Mammary epithelial cell (primary cell): ENCODE measurements at regions of chr6 and their contacts with region 1.

Region 1: DNA sequence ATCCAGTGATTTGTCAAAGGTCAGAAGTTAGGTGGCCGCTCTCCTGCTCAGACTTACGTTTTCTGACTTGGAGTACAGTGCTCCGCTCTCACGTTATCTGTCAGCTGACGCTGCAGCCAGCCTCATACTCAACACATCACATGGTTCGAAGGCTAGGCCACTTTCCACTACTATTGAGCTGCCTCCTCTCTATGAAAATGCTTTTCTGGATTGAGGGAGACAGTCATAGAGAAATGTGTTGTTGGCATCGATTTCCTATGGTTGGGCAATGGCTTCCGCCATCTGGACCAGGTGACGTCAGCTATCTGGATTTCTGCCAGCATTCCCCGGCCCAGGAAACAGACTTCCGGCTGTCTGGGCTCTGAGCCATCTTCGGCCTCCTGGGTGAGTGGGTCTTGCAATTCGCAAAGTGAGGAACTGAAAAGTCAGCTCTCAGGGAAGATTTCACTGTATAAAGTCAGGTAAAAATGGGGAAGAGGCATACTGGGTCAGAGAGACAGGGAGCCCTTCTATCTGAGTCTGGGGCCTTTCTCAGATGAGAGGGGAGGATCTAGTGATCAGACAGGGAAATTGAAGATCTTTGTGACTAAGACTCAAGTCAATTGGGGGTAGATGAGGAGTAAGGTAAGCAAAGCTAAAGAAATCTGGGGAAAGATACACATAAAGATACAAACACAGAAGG is 37.5 kb upstream of the IER3 start:
- DNase-seq: peak; percentile 97
- H3K4me3 ChIP-seq: no peak overlapping the region
- H3K27ac ChIP-seq: peak overlapping the region; percentile 97
- H3K4me1 ChIP-seq: peaks cover 36% of the 10 kb centered on the region
- H3K27me3 ChIP-seq: no peaks in the 10 kb centered on the region
- CTCF ChIP-seq: no peak

Region 2: DNA sequence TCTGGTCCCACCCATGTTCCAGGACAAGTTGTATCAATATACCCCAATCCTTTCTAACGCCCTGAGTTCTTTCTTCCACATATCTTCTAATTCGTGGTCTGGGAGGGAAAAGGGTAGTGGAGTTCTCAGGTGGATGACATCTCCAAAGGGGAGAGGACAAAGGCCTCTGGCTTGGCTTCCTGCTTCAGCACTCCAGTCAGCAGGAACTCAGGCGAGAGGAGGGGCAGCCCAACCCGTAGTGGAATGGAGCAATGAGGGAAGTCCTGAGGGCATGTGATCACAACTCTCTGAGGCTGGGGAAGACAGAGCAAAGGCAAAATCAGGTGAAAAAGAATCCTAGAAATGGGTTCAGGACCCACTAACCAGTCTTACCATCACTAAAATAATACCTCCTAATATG is 81.5 kb before region 1 on chr6:
- CTCF ChIA-PET with region 1: no interaction called
- dilution Hi-C with region 1: no loop called
- in situ Hi-C with region 1: no loop called
- intact Hi-C with region 1: no loop called
- DNase-seq: no peak
- H3K4me3 ChIP-seq: no peak overlapping the region
- H3K27ac ChIP-seq: no peak overlapping the region
- H3K4me1 ChIP-seq: peaks cover 4% of the 10 kb centered on the region
- H3K27me3 ChIP-seq: no peaks in the 10 kb centered on the region
- CTCF ChIP-seq: no peak

Region 3: DNA sequence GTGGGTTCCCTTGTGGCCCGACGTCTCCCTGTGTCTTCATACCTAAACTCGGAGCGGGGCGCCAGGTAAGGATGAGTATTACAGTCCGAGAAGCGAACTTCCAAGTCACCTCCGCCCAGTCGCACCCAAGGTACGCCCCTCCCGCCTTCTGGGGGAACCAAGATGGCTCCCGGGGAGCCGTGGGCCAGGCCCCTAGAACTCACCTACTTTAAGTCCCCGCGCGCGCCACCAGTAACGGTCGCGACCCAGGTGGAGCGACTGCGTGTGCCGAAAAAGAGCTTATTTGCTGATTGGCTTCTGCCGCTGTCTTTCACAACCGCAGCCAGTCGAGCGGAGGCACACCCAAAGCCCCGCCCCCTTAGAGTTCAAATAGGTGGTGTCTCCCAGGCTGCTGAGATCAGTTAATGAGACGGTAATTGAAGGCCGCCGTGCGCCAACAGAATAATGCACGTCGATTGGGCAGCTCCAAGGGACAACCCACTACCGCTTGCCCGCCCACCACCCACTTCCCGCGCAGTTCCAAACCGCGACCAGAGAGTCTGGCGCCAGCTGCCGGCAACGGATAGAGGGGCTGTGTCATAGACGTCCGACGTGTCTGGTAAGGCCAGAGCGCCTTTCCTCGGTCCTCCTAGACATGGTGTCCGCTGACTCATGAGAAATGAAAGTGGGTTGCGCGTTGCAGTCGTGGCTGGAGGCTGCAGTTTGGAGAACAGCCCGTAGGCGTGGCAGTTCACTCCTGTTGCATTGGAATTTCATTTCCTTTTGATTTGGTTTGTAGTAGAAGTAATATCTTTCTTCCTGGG is 64.6 kb before region 1 on chr6 and contains the start of gene MDC1:
- CTCF ChIA-PET with region 1: no interaction called
- dilution Hi-C with region 1: no loop called
- in situ Hi-C with region 1: no loop called
- intact Hi-C with region 1: no loop called
- DNase-seq: peak; percentile 100
- H3K4me3 ChIP-seq: peak within 1 kb of the TSS; percentile 56 to 69 (median 61)
- H3K27ac ChIP-seq: peak within 1 kb of the TSS; percentile 78
- H3K4me1 ChIP-seq: peaks cover 33% of the 10 kb centered on the region
- H3K27me3 ChIP-seq: no peaks in the 10 kb centered on the region
- CTCF ChIP-seq: peak in 1 of 2 donors; percentile 43
- total RNA-seq, gene MDC1: 12.8 to 36.7 TPM

Region 4: DNA sequence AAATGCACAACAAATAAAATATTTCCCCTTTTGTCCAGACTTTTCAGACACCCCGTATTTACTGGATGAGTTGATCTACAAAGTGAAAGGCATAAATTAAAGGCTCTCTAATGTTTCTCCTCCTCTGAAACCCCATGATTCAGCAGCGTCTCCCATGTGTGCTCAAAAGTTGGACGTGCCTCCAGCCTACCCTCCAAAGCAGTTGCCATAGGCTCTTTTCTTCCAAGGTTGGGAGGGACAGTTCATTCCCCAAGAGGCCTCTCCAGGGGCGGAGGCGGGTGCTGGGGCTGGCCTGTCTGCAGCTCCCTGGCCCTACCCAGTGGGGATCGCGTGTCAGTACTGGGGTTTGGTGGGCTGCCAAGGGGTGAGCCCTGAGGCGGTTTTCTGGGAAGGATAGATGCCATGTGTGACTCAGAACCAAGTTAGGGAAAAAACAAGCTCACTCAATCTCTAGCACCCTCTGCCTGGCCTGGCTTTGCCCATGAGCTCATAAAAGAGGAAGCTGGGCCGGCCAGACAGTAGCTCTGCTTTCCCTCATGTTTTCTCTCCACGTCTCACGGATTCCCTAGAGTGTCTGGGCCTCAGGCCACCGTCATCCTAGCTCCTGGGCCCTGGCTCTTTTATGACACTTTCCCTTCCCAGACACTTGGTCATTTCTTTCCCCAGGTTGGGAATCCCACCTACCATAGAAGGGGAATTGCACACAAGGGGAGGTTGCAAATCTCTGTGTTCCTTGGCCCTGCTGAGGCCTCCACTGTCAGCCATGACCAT is 29.5 kb before region 1 on chr6:
- CTCF ChIA-PET with region 1: no interaction called
- dilution Hi-C with region 1: loop called (anchors 5 kb)
- in situ Hi-C with region 1: no loop called
- intact Hi-C with region 1: loop called (anchors 1 kb)
- DNase-seq: peak; percentile 100
- H3K4me3 ChIP-seq: no peak overlapping the region
- H3K27ac ChIP-seq: peak overlapping the region; percentile 97
- H3K4me1 ChIP-seq: peaks cover 61% of the 10 kb centered on the region
- H3K27me3 ChIP-seq: no peaks in the 10 kb centered on the region
- CTCF ChIP-seq: peak in 1 of 2 donors; percentile 29

Region 5: GRCh38 chr6:30769088-30769852 is 12.6 kb before region 1 on chr6:
- CTCF ChIA-PET with region 1: no interaction called
- dilution Hi-C with region 1: no loop called
- in situ Hi-C with region 1: no loop called
- intact Hi-C with region 1: loop called (anchors 1 kb)
- DNase-seq: peak; percentile 95
- H3K4me3 ChIP-seq: peak overlapping the region in 1 of 3 experiments; percentile 22
- H3K27ac ChIP-seq: peak overlapping the region; percentile 97
- H3K4me1 ChIP-seq: peaks cover 31% of the 10 kb centered on the region
- H3K27me3 ChIP-seq: no peaks in the 10 kb centered on the region
- CTCF ChIP-seq: no peak

Region 6: DNA sequence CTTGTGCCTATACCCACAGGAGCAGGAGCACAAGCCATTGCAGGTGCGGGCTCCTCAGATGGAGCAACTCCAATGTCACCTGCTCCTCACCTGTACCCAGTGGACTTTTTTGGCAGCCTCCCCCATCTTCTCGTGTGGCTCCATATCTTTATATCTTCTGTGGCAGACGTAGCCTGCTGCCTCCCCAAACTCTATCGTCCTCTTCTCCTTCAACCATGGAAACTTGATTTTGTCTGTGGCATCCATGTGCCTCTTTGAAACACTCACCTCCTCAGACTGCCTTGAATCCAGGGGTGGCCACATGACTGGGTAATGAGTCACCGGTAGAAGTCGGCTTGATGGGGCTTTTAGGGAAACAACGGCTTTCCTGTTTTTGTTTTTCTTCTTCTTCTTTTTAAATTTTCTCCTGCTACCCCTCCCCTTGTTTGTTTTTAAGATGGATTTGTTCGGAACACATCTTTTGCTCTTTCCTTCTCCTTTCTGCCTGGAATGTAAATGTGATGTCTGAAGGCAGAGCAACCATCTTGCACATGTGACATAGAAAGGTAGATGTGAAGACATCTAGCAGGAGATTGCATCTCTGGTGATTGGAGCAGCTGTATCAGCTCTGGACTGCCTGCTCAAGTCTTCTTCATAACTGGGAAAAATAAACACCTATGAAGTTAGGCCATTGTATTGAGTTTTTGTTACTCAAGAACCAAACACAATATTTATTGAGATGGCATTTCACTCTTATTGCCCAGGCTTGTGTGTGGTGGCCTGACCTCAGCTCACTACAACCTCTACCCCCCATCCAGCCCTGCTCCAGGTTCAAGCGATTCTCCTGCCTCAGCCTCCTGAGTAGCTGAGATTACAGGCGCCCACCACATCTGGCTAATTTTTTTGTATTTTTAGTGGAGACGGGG is 32.5 kb after region 1 on chr6:
- CTCF ChIA-PET with region 1: no interaction called
- dilution Hi-C with region 1: no loop called
- in situ Hi-C with region 1: loop called in 1 of 2 experiments (anchors 5 kb)
- intact Hi-C with region 1: loop called (anchors 1 kb)
- DNase-seq: peak; percentile 88
- H3K4me3 ChIP-seq: no peak overlapping the region
- H3K27ac ChIP-seq: peak overlapping the region; percentile 72
- H3K4me1 ChIP-seq: peaks cover 51% of the 10 kb centered on the region
- H3K27me3 ChIP-seq: no peaks in the 10 kb centered on the region
- CTCF ChIP-seq: no peak

Region 7: GRCh38 chr6:30821862-30822782 is 40.2 kb after region 1 on chr6:
- CTCF ChIA-PET with region 1: no interaction called
- dilution Hi-C with region 1: no loop called
- in situ Hi-C with region 1: loop called in 1 of 2 experiments (anchors 5 kb)
- intact Hi-C with region 1: loop called (anchors 1 kb)
- DNase-seq: peak; percentile 64
- H3K4me3 ChIP-seq: peak overlapping the region in 1 of 3 experiments; percentile 10
- H3K27ac ChIP-seq: peak overlapping the region; percentile 84
- H3K4me1 ChIP-seq: peaks cover 49% of the 10 kb centered on the region
- H3K27me3 ChIP-seq: no peaks in the 10 kb centered on the region
- CTCF ChIP-seq: peak; percentile 44 to 59

Region 8: DNA sequence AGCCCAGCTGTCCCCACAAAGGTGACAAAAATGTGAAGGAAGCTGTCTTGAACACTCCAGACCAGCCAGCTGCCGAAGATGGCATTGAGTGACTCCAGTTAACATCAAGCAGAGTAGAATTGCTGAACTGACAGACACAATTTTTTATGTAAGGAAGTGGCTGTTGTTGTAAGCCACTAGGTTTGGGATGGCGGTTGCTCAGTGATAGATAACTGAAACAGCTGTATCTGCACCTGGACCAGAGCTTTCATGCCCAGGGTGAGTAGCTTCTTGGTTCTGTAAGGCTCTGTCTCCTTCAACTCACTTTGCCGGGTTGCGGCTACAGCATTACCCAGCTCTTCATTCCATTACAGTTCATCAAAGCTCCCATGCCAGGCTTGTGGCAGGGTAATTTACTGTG is 52.8 kb after region 1 on chr6:
- CTCF ChIA-PET with region 1: no interaction called
- dilution Hi-C with region 1: no loop called
- in situ Hi-C with region 1: no loop called
- intact Hi-C with region 1: no loop called
- DNase-seq: no peak
- H3K4me3 ChIP-seq: no peak overlapping the region
- H3K27ac ChIP-seq: no peak overlapping the region
- H3K4me1 ChIP-seq: peaks cover under 1% of the 10 kb centered on the region
- H3K27me3 ChIP-seq: no peaks in the 10 kb centered on the region
- CTCF ChIP-seq: no peak

Region 9: GRCh38 chr6:30877419-30878371 is 95.8 kb after region 1 on chr6:
- CTCF ChIA-PET with region 1: no interaction called
- dilution Hi-C with region 1: no loop called
- in situ Hi-C with region 1: no loop called
- intact Hi-C with region 1: loop called (anchors 1 kb)
- DNase-seq: peak; percentile 80
- H3K4me3 ChIP-seq: peak overlapping the region in 2 of 3 experiments; percentile 13 to 20
- H3K27ac ChIP-seq: peak overlapping the region; percentile 63
- H3K4me1 ChIP-seq: peaks cover 37% of the 10 kb centered on the region
- H3K27me3 ChIP-seq: no peaks in the 10 kb centered on the region
- CTCF ChIP-seq: peak; percentile 92 to 96